CD4-positive, alpha-beta memory T cell (primary cell): ENCODE measurements at regions of chr1 and their contacts with region 1.

Region 1: GRCh38 chr1:93846211-93846991 is 32.6 kb downstream of the DNTTIP2 start:
- DNase-seq: peak; percentile 85 to 91 (median 88)
- H3K4me3 ChIP-seq: peak overlapping the region; percentile 58 to 92
- H3K4me3 Mint-ChIP-seq: peak overlapping the region; percentile 87 to 97 (median 90)
- H3K27ac ChIP-seq: peak overlapping the region; percentile 81
- H3K27ac Mint-ChIP-seq: peak overlapping the region; percentile 89 to 100 (median 95)
- H3K4me1 ChIP-seq: peaks cover 31% of the 10 kb centered on the region
- H3K4me1 Mint-ChIP-seq: peaks cover 17 to 44% (median 25%) of the 10 kb centered on the region in 4 donors
- H3K27me3 ChIP-seq: no peaks in the 10 kb centered on the region
- H3K27me3 Mint-ChIP-seq: peaks cover 1 to 6% of the 10 kb centered on the region in 2 donors

Region 2: DNA sequence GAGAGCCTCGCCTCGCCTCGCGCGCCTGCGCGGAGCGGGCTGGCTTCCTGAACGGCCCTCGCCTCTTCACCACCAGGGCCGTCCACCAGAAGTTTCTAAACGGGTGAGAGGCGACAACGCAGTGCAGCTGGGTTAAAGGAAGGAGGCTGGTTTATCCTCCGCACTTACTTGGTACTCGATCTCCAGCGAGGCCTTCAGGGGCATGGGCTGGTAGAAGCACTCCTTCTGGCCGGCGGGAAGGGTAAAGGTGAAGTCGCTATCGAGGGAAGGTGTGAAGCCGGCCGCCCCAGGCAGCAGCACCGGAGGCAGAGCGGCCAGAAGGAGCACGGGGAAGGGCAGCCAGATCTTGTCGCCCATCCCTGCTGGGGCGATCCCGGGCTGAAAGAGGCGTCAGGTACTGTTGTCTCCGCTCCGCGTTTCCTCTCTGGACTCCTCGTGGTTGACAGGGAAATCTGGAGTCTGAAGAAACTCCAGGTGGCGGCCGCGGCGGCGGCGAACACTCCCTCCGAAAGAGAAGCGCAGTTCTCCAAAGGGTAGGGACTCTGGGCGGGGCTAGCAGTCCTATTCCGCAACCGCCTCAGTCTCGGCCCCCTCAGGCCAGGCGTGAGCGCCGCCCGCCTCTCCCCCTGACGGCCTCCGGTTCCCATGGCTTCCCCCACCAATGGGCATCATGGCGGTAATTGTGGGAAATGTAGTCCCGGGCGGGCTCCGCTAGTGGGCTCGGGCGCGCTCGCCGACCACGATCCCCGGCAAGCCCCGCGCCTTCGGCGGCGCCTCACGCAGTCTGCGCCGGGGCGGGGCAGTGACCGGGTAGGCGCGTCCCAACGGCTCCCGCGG is 666.3 kb before region 1 on chr1 and contains the start of gene TMED5:
- CTCF ChIA-PET with region 1: no interaction called
- POLR2A ChIA-PET with region 1: no interaction called
- intact Hi-C with region 1: loop called (anchors 2 kb)
- DNase-seq: peak; percentile 97 to 98 (median 97)
- H3K4me3 ChIP-seq: peak within 1 kb of the TSS; percentile 84 to 99
- H3K4me3 Mint-ChIP-seq: peak within 1 kb of the TSS; percentile 89 to 99 (median 93)
- H3K27ac ChIP-seq: peak within 1 kb of the TSS; percentile 98
- H3K27ac Mint-ChIP-seq: peak within 1 kb of the TSS; percentile 90 to 99 (median 96)
- H3K4me1 ChIP-seq: peaks cover 59% of the 10 kb centered on the region
- H3K4me1 Mint-ChIP-seq: peaks cover 26 to 70% (median 41%) of the 10 kb centered on the region in 4 donors
- H3K27me3 ChIP-seq: no peaks in the 10 kb centered on the region
- H3K27me3 Mint-ChIP-seq: no peaks in the 10 kb centered on the region
- total RNA-seq, gene TMED5: 60.1 to 60.8 TPM

Region 3: DNA sequence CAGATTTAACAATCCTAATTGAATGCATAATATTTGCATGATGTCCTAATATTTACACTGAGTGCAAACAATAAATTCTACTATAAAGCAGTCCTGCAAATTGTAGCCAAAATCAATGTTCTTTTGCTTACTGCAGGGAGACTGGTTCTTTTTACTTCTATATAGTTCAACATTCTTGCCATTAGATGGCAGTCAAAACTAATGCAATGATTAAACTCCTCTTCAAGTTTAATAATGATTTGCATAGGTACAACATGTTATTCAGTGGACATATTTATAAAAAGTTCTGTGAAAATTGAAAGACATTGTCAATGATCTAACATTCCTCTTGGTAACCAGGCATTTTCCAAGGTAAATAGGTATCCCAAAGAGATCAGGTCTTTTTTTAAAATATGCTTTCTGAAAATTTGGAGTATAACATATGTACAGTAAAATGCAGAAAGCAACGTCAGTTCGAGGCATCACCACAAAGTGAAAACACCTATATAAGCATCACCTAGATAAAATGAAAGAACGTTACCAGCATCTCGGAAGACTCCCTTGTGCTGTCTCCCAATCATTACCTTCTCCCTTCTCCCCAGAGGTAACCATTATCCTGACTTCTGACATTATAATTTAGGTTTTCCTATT is 408.3 kb before region 1 on chr1:
- CTCF ChIA-PET with region 1: interaction called, 8 read pairs
- POLR2A ChIA-PET with region 1: interaction called, 4 read pairs
- intact Hi-C with region 1: loop called (anchors 1 kb)
- DNase-seq: peak in 4 of 5 donors; percentile 33 to 44 (median 40)
- H3K4me3 ChIP-seq: no peak overlapping the region
- H3K4me3 Mint-ChIP-seq: peak overlapping the region in 1 of 8 donors; percentile 15
- H3K27ac ChIP-seq: no peak overlapping the region
- H3K27ac Mint-ChIP-seq: no peak overlapping the region
- H3K4me1 ChIP-seq: no peaks in the 10 kb centered on the region
- H3K4me1 Mint-ChIP-seq: peaks cover 0 to 7% (median 3%) of the 10 kb centered on the region in 4 donors
- H3K27me3 ChIP-seq: no peaks in the 10 kb centered on the region
- H3K27me3 Mint-ChIP-seq: peaks cover 4 to 7% of the 10 kb centered on the region in 2 donors

Region 4: DNA sequence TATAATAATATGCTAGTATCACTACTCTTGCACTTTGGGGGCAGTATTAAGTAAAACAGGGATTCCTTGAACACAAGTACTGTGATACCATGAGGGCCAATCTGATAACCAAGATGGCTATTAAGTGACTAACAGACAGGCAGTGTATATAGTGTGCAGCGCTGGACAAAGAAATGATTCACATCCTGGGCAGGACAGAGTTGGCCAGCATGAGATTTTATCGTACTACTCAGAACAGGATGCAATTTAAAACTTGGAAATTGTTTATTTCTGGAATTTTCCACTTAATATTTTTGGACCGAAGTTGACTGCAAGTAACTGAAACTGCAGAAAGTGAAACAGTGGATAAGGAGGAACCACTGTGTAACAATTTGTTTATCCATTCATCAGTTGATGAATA is 42.0 kb before region 1 on chr1:
- CTCF ChIA-PET with region 1: no interaction called
- POLR2A ChIA-PET with region 1: no interaction called
- intact Hi-C with region 1: no loop called
- DNase-seq: no peak
- H3K4me3 ChIP-seq: no peak overlapping the region
- H3K4me3 Mint-ChIP-seq: no peak overlapping the region
- H3K27ac ChIP-seq: no peak overlapping the region
- H3K27ac Mint-ChIP-seq: no peak overlapping the region
- H3K4me1 ChIP-seq: no peaks in the 10 kb centered on the region
- H3K4me1 Mint-ChIP-seq: no peaks in the 10 kb centered on the region
- H3K27me3 ChIP-seq: no peaks in the 10 kb centered on the region
- H3K27me3 Mint-ChIP-seq: no peaks in the 10 kb centered on the region

Region 5: DNA sequence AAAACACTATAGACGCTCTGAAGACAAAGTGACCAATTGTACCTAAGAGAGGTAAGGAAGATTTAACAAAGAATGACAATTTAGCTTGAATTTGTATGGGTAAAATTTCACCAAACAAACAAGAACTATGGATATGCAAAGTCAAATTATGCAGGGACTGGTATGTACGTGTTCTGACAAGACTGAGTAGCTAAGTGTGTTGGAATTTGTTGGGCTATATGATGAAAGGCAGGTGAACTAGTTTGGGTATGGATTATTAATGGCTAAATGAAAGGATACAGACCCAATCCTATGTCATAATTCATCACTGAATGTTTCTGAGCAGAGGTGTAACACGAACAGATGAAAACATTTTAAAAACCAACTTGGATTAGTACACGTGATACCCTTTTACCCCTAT is 25.0 kb after region 1 on chr1:
- CTCF ChIA-PET with region 1: interaction called, 15 read pairs
- POLR2A ChIA-PET with region 1: interaction called, 69 read pairs
- intact Hi-C with region 1: loop called (anchors 1 kb)
- DNase-seq: no peak
- H3K4me3 ChIP-seq: no peak overlapping the region
- H3K4me3 Mint-ChIP-seq: no peak overlapping the region
- H3K27ac ChIP-seq: no peak overlapping the region
- H3K27ac Mint-ChIP-seq: peak overlapping the region in 1 of 7 donors; percentile 79
- H3K4me1 ChIP-seq: peaks cover 9% of the 10 kb centered on the region
- H3K4me1 Mint-ChIP-seq: peaks cover 10 to 18% (median 16%) of the 10 kb centered on the region in 4 donors
- H3K27me3 ChIP-seq: no peaks in the 10 kb centered on the region
- H3K27me3 Mint-ChIP-seq: no peaks in the 10 kb centered on the region

Region 6: DNA sequence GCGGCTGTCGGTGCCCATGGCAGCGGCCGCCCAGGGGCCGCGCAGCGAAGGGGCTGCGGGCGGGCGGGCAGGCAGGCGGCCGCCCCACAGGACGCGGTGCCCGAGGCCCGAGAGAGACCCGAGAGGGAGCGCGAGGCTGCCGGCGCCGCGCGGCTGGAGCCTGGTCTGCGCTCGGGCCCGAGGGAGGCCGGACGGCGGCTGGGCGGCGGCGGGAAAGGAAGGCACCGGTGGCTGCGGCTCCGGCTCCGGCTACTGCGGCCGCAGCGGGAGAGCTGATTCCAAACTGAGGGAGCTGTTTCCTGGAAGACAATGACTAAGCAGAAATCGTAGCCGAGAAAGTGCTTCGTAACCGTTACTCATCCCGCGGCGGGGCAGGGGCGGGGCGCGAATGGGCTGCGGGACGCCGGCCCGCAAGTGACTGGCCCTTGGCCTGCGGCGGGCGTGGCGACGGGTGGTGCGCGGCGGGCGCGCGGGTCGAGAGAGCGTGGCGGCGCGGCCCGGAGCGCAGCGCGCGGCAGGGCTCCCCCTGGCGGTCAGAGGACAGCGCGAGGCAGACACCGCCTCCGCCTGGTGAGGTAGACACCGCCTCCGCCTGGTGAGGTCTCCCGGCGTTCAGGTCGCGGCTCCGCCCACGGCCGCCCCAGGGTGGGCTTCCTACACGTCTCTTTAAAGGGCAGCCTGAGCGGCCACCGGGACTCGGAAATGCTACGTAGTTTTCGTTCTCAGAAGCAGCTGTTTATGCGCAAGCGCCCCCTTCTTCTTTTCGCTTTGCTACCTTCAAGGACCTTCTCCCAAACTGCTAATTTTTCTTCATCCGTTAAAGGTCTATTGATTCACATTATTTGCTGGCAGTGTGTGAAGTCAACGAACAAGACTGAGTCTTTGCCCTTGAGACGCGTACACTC is 63.0 kb after region 1 on chr1 and contains the start of gene GCLM:
- CTCF ChIA-PET with region 1: interaction called, 18 read pairs
- POLR2A ChIA-PET with region 1: interaction called, 61 read pairs
- intact Hi-C with region 1: loop called (anchors 1 kb)
- DNase-seq: peak; percentile 86 to 90 (median 88)
- H3K4me3 ChIP-seq: peak within 1 kb of the TSS; percentile 53 to 67
- H3K4me3 Mint-ChIP-seq: peak within 1 kb of the TSS; percentile 85 to 99 (median 92)
- H3K27ac ChIP-seq: peak within 1 kb of the TSS; percentile 61
- H3K27ac Mint-ChIP-seq: peak within 1 kb of the TSS; percentile 83 to 98 (median 94)
- H3K4me1 ChIP-seq: peaks cover 37% of the 10 kb centered on the region
- H3K4me1 Mint-ChIP-seq: peaks cover 30 to 40% (median 33%) of the 10 kb centered on the region in 4 donors
- H3K27me3 ChIP-seq: no peaks in the 10 kb centered on the region
- H3K27me3 Mint-ChIP-seq: peaks cover 0 to 2% of the 10 kb centered on the region in 2 donors
- total RNA-seq, gene GCLM: 22.0 to 26.8 TPM